ENCODE measurements at regions of chr7 and their contacts with region 1.

Region 1: GRCh38 chr7:130069978-130070860 is at the start of gene KLHDC10:
- DNase-seq: peak; percentile 84 to 98 (median 96)
- ATAC-seq: peak; percentile 99
- H3K4me3 ChIP-seq: peak within 1 kb of the TSS; percentile 54
- H3K4me3 Mint-ChIP-seq: peak within 1 kb of the TSS; percentile 80 to 95 (median 92)
- H3K27ac ChIP-seq: peak within 1 kb of the TSS; percentile 82
- H3K27ac Mint-ChIP-seq: peak within 1 kb of the TSS; percentile 81 to 97 (median 90)
- H3K4me1 ChIP-seq: peaks cover 12 to 18% of the 10 kb centered on the region in 2 donors
- H3K4me1 Mint-ChIP-seq: peaks cover 34 to 51% (median 42%) of the 10 kb centered on the region in 7 donors
- H3K27me3 ChIP-seq: no peaks in the 10 kb centered on the region
- H3K27me3 Mint-ChIP-seq: peaks cover 0 to 2% (median 0%) of the 10 kb centered on the region in 5 donors
- total RNA-seq, gene KLHDC10: 14.5 to 20.4 (median 17.3) TPM

Region 2: GRCh38 chr7:129502376-129502776 is 567.8 kb before region 1 on chr7 and contains the start of gene SMKR1:
- CTCF ChIA-PET with region 1: no interaction called
- POLR2A ChIA-PET with region 1: no interaction called
- intact Hi-C with region 1: loop called in 1 of 2 experiments (anchors 5 kb)
- DNase-seq: peak; percentile 86 to 94 (median 91)
- ATAC-seq: peak; percentile 98
- H3K4me3 ChIP-seq: peak within 1 kb of the TSS; percentile 64
- H3K4me3 Mint-ChIP-seq: peak within 1 kb of the TSS; percentile 75 to 91 (median 86)
- H3K27ac ChIP-seq: peak within 1 kb of the TSS; percentile 70
- H3K27ac Mint-ChIP-seq: peak within 1 kb of the TSS; percentile 70 to 93 (median 83)
- H3K4me1 ChIP-seq: peaks cover 4 to 7% of the 10 kb centered on the region in 2 donors
- H3K4me1 Mint-ChIP-seq: peaks cover 14 to 22% (median 16%) of the 10 kb centered on the region in 7 donors
- H3K27me3 ChIP-seq: no peaks in the 10 kb centered on the region
- H3K27me3 Mint-ChIP-seq: peaks cover 0 to 23% (median 0%) of the 10 kb centered on the region in 5 donors
- total RNA-seq, gene SMKR1: 1.1 to 2.5 (median 1.4) TPM

Region 3: GRCh38 chr7:130084037-130084875 is 14.0 kb after region 1 on chr7:
- CTCF ChIA-PET with region 1: interaction called, 9 read pairs
- POLR2A ChIA-PET with region 1: interaction called, 4 read pairs
- intact Hi-C with region 1: loop called in 1 of 2 experiments (anchors 1 kb)
- DNase-seq: peak in 1 of 9 donors; percentile 14
- ATAC-seq: no peak
- H3K4me3 ChIP-seq: no peak overlapping the region
- H3K4me3 Mint-ChIP-seq: no peak overlapping the region
- H3K27ac ChIP-seq: no peak overlapping the region
- H3K27ac Mint-ChIP-seq: no peak overlapping the region
- H3K4me1 ChIP-seq: no peaks in the 10 kb centered on the region
- H3K4me1 Mint-ChIP-seq: peaks cover 8 to 49% (median 34%) of the 10 kb centered on the region in 7 donors
- H3K27me3 ChIP-seq: no peaks in the 10 kb centered on the region
- H3K27me3 Mint-ChIP-seq: no peaks in the 10 kb centered on the region

Region 4: GRCh38 chr7:130440527-130441365 is 370.5 kb after region 1 on chr7 and contains the start of gene CEP41:
- CTCF ChIA-PET with region 1: no interaction called
- POLR2A ChIA-PET with region 1: no interaction called
- intact Hi-C with region 1: loop called (anchors 1 to 5 kb)
- DNase-seq: peak; percentile 85 to 90 (median 89)
- ATAC-seq: peak; percentile 98
- H3K4me3 ChIP-seq: peak within 1 kb of the TSS; percentile 87
- H3K4me3 Mint-ChIP-seq: peak within 1 kb of the TSS; percentile 95 to 100 (median 98)
- H3K27ac ChIP-seq: peak within 1 kb of the TSS; percentile 76
- H3K27ac Mint-ChIP-seq: peak within 1 kb of the TSS; percentile 95 to 99 (median 96)
- H3K4me1 ChIP-seq: peaks cover 4 to 26% of the 10 kb centered on the region in 2 donors
- H3K4me1 Mint-ChIP-seq: peaks cover 26 to 71% (median 59%) of the 10 kb centered on the region in 7 donors
- H3K27me3 ChIP-seq: no peaks in the 10 kb centered on the region
- H3K27me3 Mint-ChIP-seq: peaks cover 0 to 4% (median 0%) of the 10 kb centered on the region in 5 donors
- total RNA-seq, gene CEP41: 6.9 to 16.0 (median 12.6) TPM

Region 5: GRCh38 chr7:130721486-130722280 is 651.5 kb after region 1 on chr7:
- CTCF ChIA-PET with region 1: no interaction called
- POLR2A ChIA-PET with region 1: no interaction called
- intact Hi-C with region 1: loop called in 1 of 2 experiments (anchors 1 kb)
- DNase-seq: no peak
- ATAC-seq: peak; percentile 55
- H3K4me3 ChIP-seq: no peak overlapping the region
- H3K4me3 Mint-ChIP-seq: no peak overlapping the region
- H3K27ac ChIP-seq: no peak overlapping the region
- H3K27ac Mint-ChIP-seq: no peak overlapping the region
- H3K4me1 ChIP-seq: no peaks in the 10 kb centered on the region
- H3K4me1 Mint-ChIP-seq: no peaks in the 10 kb centered on the region
- H3K27me3 ChIP-seq: peaks cover 0 to 3% of the 10 kb centered on the region in 2 donors
- H3K27me3 Mint-ChIP-seq: peaks cover 11 to 31% (median 21%) of the 10 kb centered on the region in 5 donors

Region 6: DNA sequence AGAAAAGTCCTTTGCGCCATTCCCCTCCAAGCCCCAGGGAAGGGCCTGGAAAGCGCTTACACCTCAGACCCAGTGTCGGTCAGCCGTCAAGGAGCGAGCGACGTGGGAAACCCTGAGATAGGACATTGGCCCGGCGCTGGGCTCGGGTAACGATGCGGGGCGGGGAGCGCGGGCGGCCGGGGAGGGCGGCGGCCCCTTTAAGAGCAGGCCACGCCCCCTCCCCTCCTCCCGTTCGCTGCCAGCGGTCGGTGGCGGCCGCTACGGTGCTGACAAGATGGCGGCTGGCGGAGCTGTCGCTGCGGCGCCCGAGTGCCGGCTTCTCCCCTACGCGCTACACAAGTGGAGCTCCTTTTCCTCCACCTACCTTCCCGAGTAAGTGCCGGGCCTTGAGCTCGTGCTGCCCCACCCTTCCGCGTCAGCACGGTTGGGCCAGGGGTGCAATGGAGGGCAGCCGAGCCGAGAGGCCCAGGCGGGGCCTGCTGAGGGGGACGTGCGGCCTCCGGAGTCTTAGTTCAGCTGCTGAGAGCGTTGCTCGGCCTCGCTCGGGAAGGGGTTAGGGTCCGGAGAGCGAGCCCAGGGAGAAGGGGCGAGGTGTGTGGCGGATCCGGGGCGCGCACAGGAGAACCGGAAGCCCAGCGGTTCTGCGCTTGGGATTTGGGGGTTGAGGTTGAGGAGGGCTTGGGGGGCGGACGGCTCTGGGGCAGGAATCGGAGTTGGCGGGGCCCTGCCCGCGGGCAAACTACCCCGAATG is 1257.6 kb after region 1 on chr7 and contains the start of gene MKLN1:
- CTCF ChIA-PET with region 1: no interaction called
- POLR2A ChIA-PET with region 1: no interaction called
- intact Hi-C with region 1: loop called in 1 of 2 experiments (anchors 2 kb)
- DNase-seq: peak; percentile 82 to 91 (median 86)
- ATAC-seq: peak; percentile 99
- H3K4me3 ChIP-seq: peak within 1 kb of the TSS; percentile 88
- H3K4me3 Mint-ChIP-seq: peak within 1 kb of the TSS; percentile 88 to 100 (median 94)
- H3K27ac ChIP-seq: peak within 1 kb of the TSS; percentile 94
- H3K27ac Mint-ChIP-seq: peak within 1 kb of the TSS; percentile 86 to 99 (median 97)
- H3K4me1 ChIP-seq: peaks cover 26 to 43% of the 10 kb centered on the region in 2 donors
- H3K4me1 Mint-ChIP-seq: peaks cover 35 to 85% (median 71%) of the 10 kb centered on the region in 7 donors
- H3K27me3 ChIP-seq: no peaks in the 10 kb centered on the region
- H3K27me3 Mint-ChIP-seq: no peaks in the 10 kb centered on the region
- total RNA-seq, gene MKLN1: 42.0 to 69.8 (median 59.3) TPM

Measured in naive thymus-derived CD4-positive, alpha-beta T cell (primary cell).